Colonic mucosa (tissue), 4 donors: ENCODE measurements at regions of chr20 and their contacts with region 1.

Region 1: GRCh38 chr20:58209652-58210397 is 18.6 kb downstream of the ANKRD60 start:
- DNase-seq: peak; percentile 85
- H3K4me3 ChIP-seq: no peak overlapping the region
- H3K27ac ChIP-seq: no peak overlapping the region
- H3K4me1 ChIP-seq: no peaks in the 10 kb centered on the region
- H3K27me3 ChIP-seq: peaks cover 3% of the 10 kb centered on the region
- CTCF ChIP-seq: peak; percentile 100

Region 2: DNA sequence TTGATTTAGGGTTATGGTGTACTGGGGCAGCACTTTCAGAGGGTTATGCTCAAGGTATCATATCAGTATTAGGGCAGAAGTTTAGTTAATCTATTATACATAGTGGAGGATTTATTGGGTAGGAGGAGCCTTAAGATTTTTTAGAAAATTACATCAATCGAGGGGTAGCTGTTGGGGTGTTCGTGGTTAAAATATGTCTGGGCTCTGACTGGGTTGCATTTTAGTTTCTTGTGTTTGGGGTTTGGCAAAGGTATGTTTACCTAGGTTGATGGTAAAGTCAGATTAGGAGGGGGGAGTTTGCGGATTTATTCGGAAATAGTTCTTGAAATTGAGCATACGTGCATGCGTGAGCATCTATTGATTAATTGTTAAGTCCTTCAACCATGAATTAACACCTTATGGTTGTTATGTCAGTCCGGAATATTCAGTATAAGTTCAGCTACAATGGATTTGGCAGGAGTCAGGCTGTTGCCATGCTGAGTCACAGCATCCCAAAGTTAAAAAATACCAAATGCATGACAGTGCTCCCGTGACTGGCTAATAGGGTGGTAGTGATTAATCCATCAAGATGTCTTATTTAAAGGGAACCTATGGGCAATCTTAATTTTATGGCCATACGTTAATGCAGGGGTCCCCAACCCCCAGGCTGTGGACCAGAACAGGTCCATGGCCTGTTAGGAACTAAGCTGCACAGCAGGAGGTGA is 848.5 kb before region 1 on chr20:
- intact Hi-C with region 1: loop called (anchors 10 kb)
- DNase-seq: no peak
- H3K4me3 ChIP-seq: no peak overlapping the region
- H3K27ac ChIP-seq: no peak overlapping the region
- H3K4me1 ChIP-seq: no peaks in the 10 kb centered on the region
- H3K27me3 ChIP-seq: no peaks in the 10 kb centered on the region
- CTCF ChIP-seq: no peak

Region 3: GRCh38 chr20:57514273-57514751 is 695.5 kb before region 1 on chr20:
- intact Hi-C with region 1: loop called (anchors 5 kb)
- DNase-seq: peak; percentile 79
- H3K4me3 ChIP-seq: no peak overlapping the region
- H3K27ac ChIP-seq: no peak overlapping the region
- H3K4me1 ChIP-seq: no peaks in the 10 kb centered on the region
- H3K27me3 ChIP-seq: no peaks in the 10 kb centered on the region
- CTCF ChIP-seq: peak; percentile 69

Region 4: GRCh38 chr20:57938158-57939108 is 271.4 kb before region 1 on chr20:
- intact Hi-C with region 1: no loop called
- DNase-seq: no peak
- H3K4me3 ChIP-seq: no peak overlapping the region
- H3K27ac ChIP-seq: no peak overlapping the region
- H3K4me1 ChIP-seq: no peaks in the 10 kb centered on the region
- H3K27me3 ChIP-seq: no peaks in the 10 kb centered on the region
- CTCF ChIP-seq: no peak

Region 5: GRCh38 chr20:58135441-58136149 is 74.2 kb before region 1 on chr20:
- intact Hi-C with region 1: no loop called
- DNase-seq: no peak
- H3K4me3 ChIP-seq: no peak overlapping the region
- H3K27ac ChIP-seq: no peak overlapping the region
- H3K4me1 ChIP-seq: no peaks in the 10 kb centered on the region
- H3K27me3 ChIP-seq: no peaks in the 10 kb centered on the region
- CTCF ChIP-seq: no peak